CD8-positive, alpha-beta T cell (primary cell): ENCODE measurements at regions of chr11 and their contacts with region 1.

Region 1: GRCh38 chr11:65615229-65615941 is at the start of gene PCNX3:
- DNase-seq: peak; percentile 99 to 100 (median 100)
- ATAC-seq: peak; percentile 88
- H3K4me3 ChIP-seq: peak within 1 kb of the TSS; percentile 78 to 89
- H3K4me3 Mint-ChIP-seq: peak within 1 kb of the TSS; percentile 96
- H3K27ac ChIP-seq: peak within 1 kb of the TSS; percentile 92 to 97
- H3K27ac Mint-ChIP-seq: peak within 1 kb of the TSS; percentile 96
- H3K4me1 ChIP-seq: peaks cover 46% of the 10 kb centered on the region
- H3K4me1 Mint-ChIP-seq: peaks cover 45% of the 10 kb centered on the region
- H3K27me3 ChIP-seq: no peaks in the 10 kb centered on the region
- H3K27me3 Mint-ChIP-seq: no peaks in the 10 kb centered on the region
- CTCF ChIP-seq: no peak
- total RNA-seq, gene PCNX3: 52.7 to 56.4 TPM

Region 2: DNA sequence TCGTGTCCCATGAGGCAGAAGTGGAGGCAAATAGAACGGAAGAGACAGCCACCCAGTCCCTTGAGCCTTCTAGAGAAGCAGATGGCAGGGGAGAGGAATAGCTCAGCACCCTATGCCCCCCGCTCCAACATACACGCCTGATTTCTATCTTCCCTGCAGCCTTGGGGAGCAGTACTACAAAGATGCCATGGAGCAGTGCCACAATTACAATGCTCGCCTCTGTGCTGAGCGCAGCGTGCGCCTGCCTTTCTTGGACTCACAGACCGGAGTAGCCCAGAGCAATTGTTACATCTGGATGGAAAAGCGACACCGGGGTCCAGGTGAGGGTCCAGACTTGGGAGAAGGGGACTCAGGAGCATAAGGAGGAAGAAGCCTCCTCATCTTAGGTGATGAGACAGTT is 275.2 kb before region 1 on chr11:
- CTCF ChIA-PET with region 1: no interaction called
- POLR2A ChIA-PET with region 1: no interaction called
- intact Hi-C with region 1: no loop called
- DNase-seq: no peak
- ATAC-seq: no peak
- H3K4me3 ChIP-seq: no peak overlapping the region
- H3K4me3 Mint-ChIP-seq: no peak overlapping the region
- H3K27ac ChIP-seq: no peak overlapping the region
- H3K27ac Mint-ChIP-seq: no peak overlapping the region
- H3K4me1 ChIP-seq: peaks cover 11% of the 10 kb centered on the region
- H3K4me1 Mint-ChIP-seq: peaks cover 36% of the 10 kb centered on the region
- H3K27me3 ChIP-seq: no peaks in the 10 kb centered on the region
- H3K27me3 Mint-ChIP-seq: no peaks in the 10 kb centered on the region
- CTCF ChIP-seq: no peak

Region 3: DNA sequence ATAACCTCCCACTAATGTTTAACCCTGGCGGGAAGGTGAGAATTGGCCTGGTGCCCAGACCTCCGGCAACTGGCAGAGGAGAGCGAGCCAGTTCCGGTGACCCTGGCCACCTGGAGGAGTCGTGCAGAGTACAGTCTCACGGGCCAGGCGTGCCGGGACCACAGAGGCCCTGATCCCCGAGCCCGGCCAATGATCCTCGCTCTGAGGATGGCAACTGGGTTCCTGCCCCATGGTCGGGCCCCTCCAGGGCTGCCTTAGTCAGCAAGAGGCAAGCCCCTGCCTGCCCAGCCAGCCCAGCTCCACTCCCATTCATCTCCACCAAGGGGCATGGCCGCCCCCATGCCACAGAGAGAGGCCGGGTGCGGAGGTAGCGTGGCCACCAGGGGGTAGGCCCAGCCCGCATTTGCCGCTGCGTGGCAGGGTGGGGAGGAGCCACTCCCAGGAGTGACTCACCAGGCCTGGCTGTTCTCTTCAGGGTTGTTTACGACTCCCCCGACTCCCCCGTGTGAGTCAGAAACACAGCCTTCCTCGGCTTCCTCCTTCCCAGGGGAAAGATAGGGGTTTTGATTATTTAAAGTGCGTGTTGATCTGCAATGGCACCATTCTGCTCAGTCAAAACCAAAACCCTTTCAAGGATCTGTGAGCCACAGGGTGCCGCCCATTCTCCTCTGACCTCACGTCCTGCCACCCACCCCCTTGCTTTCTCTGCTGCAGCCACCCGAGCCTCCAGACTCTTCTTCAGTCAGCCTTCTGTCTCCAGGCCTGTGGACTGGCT is 233.2 kb before region 1 on chr11 and contains the start of gene SLC25A45:
- CTCF ChIA-PET with region 1: no interaction called
- POLR2A ChIA-PET with region 1: no interaction called
- intact Hi-C with region 1: loop called in 1 of 2 experiments (anchors 1 kb)
- DNase-seq: peak; percentile 77 to 96 (median 92)
- ATAC-seq: peak; percentile 83
- H3K4me3 ChIP-seq: peak within 1 kb of the TSS; percentile 60 to 98
- H3K4me3 Mint-ChIP-seq: peak within 1 kb of the TSS; percentile 87
- H3K27ac ChIP-seq: peak within 1 kb of the TSS; percentile 97 to 100
- H3K27ac Mint-ChIP-seq: peak within 1 kb of the TSS; percentile 99
- H3K4me1 ChIP-seq: peaks cover 54% of the 10 kb centered on the region
- H3K4me1 Mint-ChIP-seq: peaks cover 42% of the 10 kb centered on the region
- H3K27me3 ChIP-seq: no peaks in the 10 kb centered on the region
- H3K27me3 Mint-ChIP-seq: no peaks in the 10 kb centered on the region
- CTCF ChIP-seq: peak; percentile 81
- total RNA-seq, gene SLC25A45: 27.8 to 29.6 TPM

Region 4: GRCh38 chr11:65575568-65576231 is 39.7 kb before region 1 on chr11 and contains the start of gene EHBP1L1:
- CTCF ChIA-PET with region 1: interaction called, 5 read pairs
- POLR2A ChIA-PET with region 1: interaction called, 38 read pairs
- intact Hi-C with region 1: loop called (anchors 1 kb)
- DNase-seq: peak; percentile 45 to 88 (median 75)
- ATAC-seq: peak; percentile 32
- H3K4me3 ChIP-seq: peak within 1 kb of the TSS; percentile 71 to 78
- H3K4me3 Mint-ChIP-seq: peak within 1 kb of the TSS; percentile 93
- H3K27ac ChIP-seq: peak within 1 kb of the TSS; percentile 49 to 89
- H3K27ac Mint-ChIP-seq: peak within 1 kb of the TSS; percentile 96
- H3K4me1 ChIP-seq: peaks cover 54% of the 10 kb centered on the region
- H3K4me1 Mint-ChIP-seq: peaks cover 55% of the 10 kb centered on the region
- H3K27me3 ChIP-seq: no peaks in the 10 kb centered on the region
- H3K27me3 Mint-ChIP-seq: no peaks in the 10 kb centered on the region
- CTCF ChIP-seq: no peak
- total RNA-seq, gene EHBP1L1: 64.7 to 65.1 TPM

Region 5: DNA sequence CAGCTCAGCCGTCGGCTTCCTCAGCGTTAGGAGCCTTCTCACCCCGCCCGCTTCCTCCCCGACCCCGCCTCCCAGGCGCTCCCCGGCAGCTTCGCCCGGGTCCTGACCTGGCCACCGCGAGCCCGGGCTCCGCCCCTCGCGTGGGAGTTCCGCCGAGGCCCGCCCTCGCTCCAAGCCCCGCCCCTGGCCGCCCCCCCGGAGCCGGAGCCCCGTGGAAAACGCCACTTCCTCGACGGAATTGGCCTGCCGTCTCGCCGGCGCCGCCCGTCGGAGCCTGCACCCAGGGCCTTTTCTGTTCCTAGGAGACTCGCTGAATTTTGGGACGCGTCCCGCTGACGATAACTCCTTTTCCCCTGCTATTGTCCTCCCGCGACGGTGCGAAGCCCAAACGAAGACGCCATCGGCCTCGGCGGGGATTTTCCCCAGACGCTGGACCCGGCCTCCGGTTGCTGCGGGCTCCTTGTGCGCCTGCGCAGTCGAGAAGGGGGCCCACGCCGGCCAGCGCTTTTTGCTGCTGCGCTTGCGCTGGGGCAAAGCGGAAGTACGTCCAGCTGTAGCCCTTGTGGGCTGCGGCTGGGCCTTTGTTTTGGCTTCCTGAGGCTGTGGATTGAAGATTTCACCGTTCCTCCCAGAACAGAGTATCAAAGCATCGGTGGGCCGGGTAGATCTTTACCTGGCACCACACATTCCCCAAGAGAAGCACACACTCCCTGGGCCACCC is 37.3 kb after region 1 on chr11:
- CTCF ChIA-PET with region 1: no interaction called
- POLR2A ChIA-PET with region 1: interaction called, 34 read pairs
- intact Hi-C with region 1: loop called (anchors 1 kb)
- DNase-seq: peak; percentile 93 to 99 (median 97)
- ATAC-seq: peak; percentile 80
- H3K4me3 ChIP-seq: peak overlapping the region; percentile 69 to 83
- H3K4me3 Mint-ChIP-seq: peak overlapping the region; percentile 86
- H3K27ac ChIP-seq: peak overlapping the region; percentile 94 to 100
- H3K27ac Mint-ChIP-seq: peak overlapping the region; percentile 98
- H3K4me1 ChIP-seq: peaks cover 27% of the 10 kb centered on the region
- H3K4me1 Mint-ChIP-seq: peaks cover 45% of the 10 kb centered on the region
- H3K27me3 ChIP-seq: no peaks in the 10 kb centered on the region
- H3K27me3 Mint-ChIP-seq: no peaks in the 10 kb centered on the region
- CTCF ChIP-seq: no peak

Region 6: DNA sequence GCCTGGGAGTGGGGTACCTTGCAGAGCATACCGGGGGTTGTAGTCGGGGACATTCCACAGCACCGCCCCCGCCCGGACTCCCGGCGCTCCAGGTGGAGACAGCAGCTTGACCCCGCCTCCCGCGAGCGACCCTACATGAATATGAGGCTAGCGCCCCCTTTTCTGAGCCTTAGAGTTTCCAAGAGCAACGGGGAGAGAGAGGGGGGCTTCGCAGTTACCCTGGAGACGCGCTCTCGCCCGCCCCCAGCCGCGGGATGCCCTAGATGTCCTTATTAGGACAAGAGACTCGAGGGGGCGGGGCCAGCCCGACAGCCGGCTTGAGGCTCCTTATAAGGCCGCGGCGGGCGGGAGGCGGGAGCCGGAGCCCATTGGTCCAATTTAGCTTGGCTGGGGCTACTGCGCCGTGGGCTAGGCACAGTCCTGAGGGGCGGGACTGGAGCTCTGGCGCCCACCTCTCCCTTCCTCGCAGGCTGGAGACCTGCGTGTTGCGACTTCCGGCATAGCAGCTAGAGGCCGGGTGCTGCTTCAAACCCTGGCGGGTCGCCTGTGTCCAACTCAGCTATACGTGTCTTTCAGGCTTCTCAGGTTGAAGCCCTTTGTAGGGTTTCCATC is 243.9 kb after region 1 on chr11:
- CTCF ChIA-PET with region 1: no interaction called
- POLR2A ChIA-PET with region 1: interaction called, 10 read pairs
- intact Hi-C with region 1: loop called (anchors 1 kb)
- DNase-seq: peak; percentile 91 to 98 (median 98)
- ATAC-seq: peak; percentile 60
- H3K4me3 ChIP-seq: peak overlapping the region; percentile 65 to 73
- H3K4me3 Mint-ChIP-seq: peak overlapping the region; percentile 95
- H3K27ac ChIP-seq: peak overlapping the region; percentile 78 to 98
- H3K27ac Mint-ChIP-seq: peak overlapping the region; percentile 96
- H3K4me1 ChIP-seq: peaks cover 42% of the 10 kb centered on the region
- H3K4me1 Mint-ChIP-seq: peaks cover 51% of the 10 kb centered on the region
- H3K27me3 ChIP-seq: no peaks in the 10 kb centered on the region
- H3K27me3 Mint-ChIP-seq: no peaks in the 10 kb centered on the region
- CTCF ChIP-seq: no peak

Region 7: GRCh38 chr11:66051766-66052663 is 436.6 kb after region 1 on chr11 and contains the start of gene SF3B2:
- CTCF ChIA-PET with region 1: no interaction called
- POLR2A ChIA-PET with region 1: no interaction called
- intact Hi-C with region 1: loop called (anchors 1 to 2 kb)
- DNase-seq: peak; percentile 88 to 99 (median 94)
- ATAC-seq: peak; percentile 97
- H3K4me3 ChIP-seq: peak within 1 kb of the TSS; percentile 97 to 99
- H3K4me3 Mint-ChIP-seq: peak within 1 kb of the TSS; percentile 98
- H3K27ac ChIP-seq: peak within 1 kb of the TSS; percentile 87 to 91
- H3K27ac Mint-ChIP-seq: peak within 1 kb of the TSS; percentile 97
- H3K4me1 ChIP-seq: peaks cover 29% of the 10 kb centered on the region
- H3K4me1 Mint-ChIP-seq: peaks cover 32% of the 10 kb centered on the region
- H3K27me3 ChIP-seq: no peaks in the 10 kb centered on the region
- H3K27me3 Mint-ChIP-seq: no peaks in the 10 kb centered on the region
- CTCF ChIP-seq: no peak
- total RNA-seq, gene SF3B2: 196 to 217 TPM